ENCODE measurements at regions of chr20 and their contacts with region 1.

Region 1: DNA sequence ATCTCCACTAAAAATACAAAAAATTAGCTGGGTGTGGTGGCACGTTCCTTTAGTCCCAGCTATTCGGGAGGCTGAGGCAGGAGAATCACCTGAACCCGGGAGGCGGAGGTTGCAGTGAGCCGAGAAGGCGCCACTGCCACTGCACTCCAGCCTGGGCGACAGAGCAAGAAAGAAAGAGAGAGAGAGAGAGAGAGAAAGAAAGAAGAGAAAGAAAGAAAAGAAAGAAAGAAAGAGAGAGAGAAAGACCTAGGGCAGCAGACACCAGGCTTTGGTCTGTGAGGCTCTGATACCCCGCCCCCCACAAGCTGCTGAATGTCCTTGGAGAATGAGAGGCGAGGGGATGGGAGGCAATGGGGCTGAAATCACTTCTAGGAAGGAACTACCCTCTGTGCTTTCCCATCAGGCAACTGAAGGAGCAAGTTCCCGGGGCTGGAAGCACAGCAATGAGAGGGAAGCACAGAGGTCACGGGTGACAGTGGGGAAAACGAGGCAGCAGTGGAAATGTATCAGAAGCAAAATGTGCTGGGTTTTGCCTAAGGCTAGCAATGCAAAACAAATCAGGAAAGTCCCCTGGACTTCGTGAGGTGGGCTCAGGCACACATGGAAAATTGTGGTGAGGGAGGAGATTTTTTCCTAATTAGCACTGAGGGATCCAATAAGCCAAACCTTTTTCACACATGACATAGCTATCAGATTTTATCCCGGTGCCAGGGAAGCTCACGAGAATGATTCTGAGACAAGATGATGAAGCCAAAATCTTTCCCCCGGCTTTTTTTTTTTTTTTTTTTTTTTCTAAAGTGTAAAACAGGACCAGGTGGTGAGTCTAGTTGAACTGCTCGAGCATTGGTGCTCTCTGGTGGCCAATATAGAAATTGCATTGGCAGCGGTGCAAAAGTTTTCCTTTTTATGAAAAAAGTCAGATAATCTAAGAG is 16.9 kb upstream of the ARFGEF2 start:
- DNase-seq: peak; percentile 49 to 70
- H3K4me3 ChIP-seq: no peak overlapping the region
- H3K27ac ChIP-seq: no peak overlapping the region
- H3K4me1 ChIP-seq: peaks cover 0 to 6% (median 5%) of the 10 kb centered on the region in 4 donors
- H3K27me3 ChIP-seq: peaks cover 0 to 6% of the 10 kb centered on the region in 2 donors
- CTCF ChIP-seq: peak; percentile 83 to 84

Region 2: DNA sequence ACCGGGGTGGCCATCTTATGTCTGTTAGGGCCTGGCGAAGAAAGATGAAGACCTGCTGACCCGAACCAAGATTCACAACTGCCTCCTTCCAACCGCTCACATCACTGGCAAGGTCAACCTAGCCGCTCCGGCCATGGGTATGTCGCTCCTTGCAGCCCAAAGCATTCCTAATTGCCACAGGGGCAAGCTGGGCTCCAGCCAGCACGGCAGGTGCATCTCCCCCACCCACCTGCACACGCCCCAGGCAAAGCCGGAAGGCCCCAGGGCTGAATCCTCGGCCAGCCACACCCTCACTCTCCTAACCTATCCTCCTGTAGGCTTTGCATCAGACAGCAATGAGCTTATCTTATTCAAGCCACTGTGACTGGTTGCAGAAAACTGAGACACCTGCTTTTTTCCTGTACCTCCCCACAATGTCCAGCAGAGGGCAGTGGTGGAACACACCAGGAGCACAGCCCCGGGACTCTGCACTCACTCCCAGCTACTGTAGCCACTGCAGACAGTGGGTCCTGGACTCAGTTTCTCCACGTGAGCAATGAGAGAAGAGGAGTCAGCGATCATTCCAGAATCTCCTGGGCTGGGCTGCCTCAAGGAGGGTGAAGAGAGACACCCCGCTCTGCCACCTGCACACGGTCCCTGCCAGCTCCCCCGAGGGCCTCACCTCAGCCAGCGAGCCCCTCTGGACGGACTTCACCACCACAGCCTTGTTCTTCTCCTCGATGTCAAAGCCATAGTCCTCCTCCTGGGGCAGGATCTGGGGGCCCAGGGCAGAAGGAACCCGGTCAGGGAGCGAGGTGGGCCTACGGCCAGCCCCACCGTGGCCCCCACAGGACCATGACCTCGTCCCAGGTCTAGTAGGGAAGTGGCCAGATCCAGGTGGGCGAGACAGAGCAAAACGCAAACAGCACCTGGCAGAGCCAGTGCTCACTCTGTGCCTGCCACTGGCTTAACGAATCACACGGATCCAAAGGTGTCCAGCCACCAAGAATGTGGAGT is 246.9 kb before region 1 on chr20:
- intact Hi-C with region 1: loop called (anchors 1 kb)
- DNase-seq: peak; percentile 73 to 83
- H3K4me3 ChIP-seq: no peak overlapping the region
- H3K27ac ChIP-seq: peak overlapping the region; percentile 30 to 59
- H3K4me1 ChIP-seq: peaks cover 0 to 52% (median 34%) of the 10 kb centered on the region in 4 donors
- H3K27me3 ChIP-seq: no peaks in the 10 kb centered on the region
- CTCF ChIP-seq: peak; percentile 95 to 96

Region 3: GRCh38 chr20:48733296-48733887 is 171.2 kb before region 1 on chr20:
- intact Hi-C with region 1: loop called (anchors 5 kb)
- DNase-seq: no peak
- H3K4me3 ChIP-seq: no peak overlapping the region
- H3K27ac ChIP-seq: no peak overlapping the region
- H3K4me1 ChIP-seq: peaks cover 0 to 25% (median 11%) of the 10 kb centered on the region in 4 donors
- H3K27me3 ChIP-seq: no peaks in the 10 kb centered on the region
- CTCF ChIP-seq: no peak